Heart right ventricle (tissue), 16 donors: ENCODE measurements at regions of chr1 and their contacts with region 1.

Region 1: GRCh38 chr1:241847796-241848685 is at the start of gene EXO1:
- DNase-seq: peak; percentile 83 to 86
- ATAC-seq: peak; percentile 96 to 100 (median 99)
- H3K4me3 ChIP-seq: peak within 1 kb of the TSS; percentile 42 to 97 (median 76)
- H3K27ac ChIP-seq: peak within 1 kb of the TSS; percentile 93 to 100 (median 98)
- H3K4me1 ChIP-seq: peaks cover 4 to 15% (median 7%) of the 10 kb centered on the region in 9 donors
- H3K27me3 ChIP-seq: no peaks in the 10 kb centered on the region
- CTCF ChIP-seq: peak in 5 of 9 donors; percentile 13 to 60 (median 56)
- total RNA-seq, gene EXO1: 0.13 to 1.4 (median 0.41) TPM in 7 of 10 donors, not detected in the others

Region 2: DNA sequence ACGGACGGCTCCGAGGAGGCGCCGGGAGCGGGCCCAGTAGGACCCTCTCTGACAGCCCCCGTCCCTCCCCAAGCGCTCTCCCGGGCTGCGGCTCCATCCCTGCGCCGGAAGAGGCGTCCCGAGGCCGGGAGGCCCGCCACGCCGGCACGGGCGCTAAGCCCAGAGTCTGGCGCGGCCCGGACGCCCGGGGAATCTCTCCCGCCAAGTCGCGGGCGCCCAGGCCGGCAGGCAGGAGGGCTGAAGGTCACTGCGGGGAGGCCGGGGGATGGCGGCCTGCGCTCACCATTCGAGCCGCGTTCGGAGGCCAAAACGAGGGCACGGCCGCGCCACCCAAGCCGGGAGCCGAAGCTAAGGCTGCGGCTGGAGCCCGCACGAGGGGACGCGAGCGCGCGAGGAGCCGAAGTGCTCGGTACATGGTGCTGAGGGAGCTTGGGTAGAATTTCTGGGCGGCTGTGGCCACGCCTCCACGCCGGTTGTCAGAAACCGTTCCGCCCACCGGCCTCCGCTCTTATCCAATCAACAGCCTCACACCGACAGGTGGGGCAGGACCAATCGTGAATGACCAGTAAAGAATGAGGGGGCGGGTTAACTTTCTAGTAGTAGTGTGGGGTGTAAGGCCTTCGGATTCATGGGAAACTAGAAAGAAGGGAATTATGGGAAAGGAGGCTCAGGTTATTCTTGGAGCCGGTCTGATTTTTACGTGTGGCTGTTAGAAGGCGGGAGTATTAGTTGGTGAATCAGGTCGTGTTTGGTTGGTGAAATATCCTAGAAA is 328.5 kb before region 1 on chr1 and contains the start of gene FH:
- intact Hi-C with region 1: loop called in 1 of 10 experiments (anchors 10 kb)
- DNase-seq: peak; percentile 94 to 97
- ATAC-seq: peak; percentile 99 to 100 (median 100)
- H3K4me3 ChIP-seq: peak within 1 kb of the TSS; percentile 67 to 97 (median 87)
- H3K27ac ChIP-seq: peak within 1 kb of the TSS; percentile 83 to 95 (median 93)
- H3K4me1 ChIP-seq: peaks cover 0 to 32% (median 21%) of the 10 kb centered on the region in 9 donors
- H3K27me3 ChIP-seq: peaks cover 0 to 26% (median 0%) of the 10 kb centered on the region in 7 donors
- CTCF ChIP-seq: no peak
- total RNA-seq, gene FH: 178 to 268 (median 257) TPM

Region 3: GRCh38 chr1:241531195-241532161 is 316.6 kb before region 1 on chr1:
- intact Hi-C with region 1: loop called in 2 of 10 experiments (anchors 10 kb)
- DNase-seq: no peak
- ATAC-seq: peak in 7 of 8 donors; percentile 70 to 78 (median 75)
- H3K4me3 ChIP-seq: peak overlapping the region in 9 of 10 donors; percentile 21 to 60 (median 49)
- H3K27ac ChIP-seq: peak overlapping the region in 3 of 10 donors; percentile 11 to 82 (median 25)
- H3K4me1 ChIP-seq: peaks cover 0 to 9% (median 0%) of the 10 kb centered on the region in 9 donors
- H3K27me3 ChIP-seq: peaks cover 0 to 23% (median 11%) of the 10 kb centered on the region in 7 donors
- CTCF ChIP-seq: peak; percentile 30 to 74 (median 61)

Region 4: GRCh38 chr1:241542199-241542910 is 305.7 kb before region 1 on chr1:
- intact Hi-C with region 1: loop called in 2 of 10 experiments (anchors 10 kb)
- DNase-seq: no peak
- ATAC-seq: no peak
- H3K4me3 ChIP-seq: no peak overlapping the region
- H3K27ac ChIP-seq: no peak overlapping the region
- H3K4me1 ChIP-seq: no peaks in the 10 kb centered on the region
- H3K27me3 ChIP-seq: peaks cover 0 to 39% (median 7%) of the 10 kb centered on the region in 7 donors
- CTCF ChIP-seq: no peak

Region 5: DNA sequence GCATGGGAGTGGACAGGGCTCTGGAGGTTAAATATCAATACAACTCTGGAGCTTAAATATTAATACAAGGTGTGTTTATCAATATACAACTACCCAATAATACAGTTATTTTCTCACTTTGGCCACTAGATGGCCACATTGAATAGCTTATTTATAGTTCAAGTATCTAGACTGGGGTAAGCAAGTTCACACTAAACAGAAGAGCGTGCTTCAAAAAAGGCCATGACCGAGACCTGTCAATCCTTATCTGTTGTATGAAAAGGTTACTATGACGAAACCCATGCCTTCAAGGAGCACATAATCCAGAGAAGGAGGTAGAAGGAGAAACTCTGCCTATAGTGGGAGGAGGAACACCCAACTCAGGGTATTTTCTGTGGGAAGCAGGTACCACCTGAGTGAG is 237.0 kb before region 1 on chr1:
- intact Hi-C with region 1: loop called in 3 of 10 experiments (anchors 5 to 10 kb)
- DNase-seq: no peak
- ATAC-seq: peak in 7 of 8 donors; percentile 72 to 88 (median 83)
- H3K4me3 ChIP-seq: no peak overlapping the region
- H3K27ac ChIP-seq: peak overlapping the region in 1 of 10 donors; percentile 59
- H3K4me1 ChIP-seq: peaks cover 0 to 19% (median 0%) of the 10 kb centered on the region in 9 donors
- H3K27me3 ChIP-seq: no peaks in the 10 kb centered on the region
- CTCF ChIP-seq: peak; percentile 54 to 77 (median 68)

Region 6: GRCh38 chr1:241640029-241640818 is 207.8 kb before region 1 on chr1 and contains the starts of genes CHML and OPN3:
- intact Hi-C with region 1: loop called in 1 of 10 experiments (anchors 10 kb)
- DNase-seq: peak; percentile 93 to 97
- ATAC-seq: peak; percentile 98 to 100 (median 100)
- H3K4me3 ChIP-seq: peak within 1 kb of the TSS; percentile 71 to 100 (median 91)
- H3K27ac ChIP-seq: peak within 1 kb of the TSS in 9 of 10 donors; percentile 77 to 91 (median 83)
- H3K4me1 ChIP-seq: peaks cover 0 to 40% (median 12%) of the 10 kb centered on the region in 9 donors
- H3K27me3 ChIP-seq: no peaks in the 10 kb centered on the region
- CTCF ChIP-seq: peak in 1 of 9 donors; percentile 1
- total RNA-seq, gene CHML: 4.8 to 11.4 (median 8.0) TPM
- total RNA-seq, gene OPN3: 3.3 to 9.1 (median 4.9) TPM

Region 7: DNA sequence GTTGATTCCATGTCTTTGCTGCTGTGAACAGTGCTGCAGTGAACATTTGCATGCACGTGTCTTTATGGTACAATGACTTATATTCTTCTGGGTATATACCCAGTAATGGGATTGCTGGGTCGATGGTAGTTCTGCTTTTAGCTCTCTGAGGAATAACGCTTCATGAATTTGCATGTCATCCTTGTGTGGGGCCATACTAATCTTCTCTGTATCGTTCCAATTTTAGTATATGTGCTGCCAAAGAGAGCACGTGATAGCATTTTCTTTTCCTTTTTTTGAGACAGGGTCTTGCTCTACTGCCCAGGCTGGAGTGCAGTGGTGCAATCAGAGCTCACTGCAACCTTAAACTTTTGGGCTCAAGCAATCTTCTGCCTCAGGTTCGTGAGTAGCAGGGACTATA is 175.8 kb after region 1 on chr1:
- intact Hi-C with region 1: no loop called
- DNase-seq: no peak
- ATAC-seq: no peak
- H3K4me3 ChIP-seq: no peak overlapping the region
- H3K27ac ChIP-seq: no peak overlapping the region
- H3K4me1 ChIP-seq: no peaks in the 10 kb centered on the region
- H3K27me3 ChIP-seq: peaks cover 0 to 9% (median 0%) of the 10 kb centered on the region in 7 donors
- CTCF ChIP-seq: no peak